CD8-positive, alpha-beta T cell (primary cell): ENCODE measurements at regions of chr2 and their contacts with region 1.

Region 1: GRCh38 chr2:72137498-72138010 is 10.1 kb downstream of the CYP26B1 start:
- DNase-seq: peak; percentile 27 to 75 (median 54)
- ATAC-seq: peak; percentile 48
- H3K4me3 ChIP-seq: no peak overlapping the region
- H3K4me3 Mint-ChIP-seq: no peak overlapping the region
- H3K27ac ChIP-seq: no peak overlapping the region
- H3K27ac Mint-ChIP-seq: no peak overlapping the region
- H3K4me1 ChIP-seq: no peaks in the 10 kb centered on the region
- H3K4me1 Mint-ChIP-seq: peaks cover 1% of the 10 kb centered on the region
- H3K27me3 ChIP-seq: no peaks in the 10 kb centered on the region
- H3K27me3 Mint-ChIP-seq: peaks cover 14% of the 10 kb centered on the region
- CTCF ChIP-seq: peak; percentile 73

Region 2: GRCh38 chr2:72112401-72112800 is 25.2 kb before region 1 on chr2:
- CTCF ChIA-PET with region 1: no interaction called
- POLR2A ChIA-PET with region 1: no interaction called
- intact Hi-C with region 1: no loop called
- DNase-seq: no peak
- ATAC-seq: no peak
- H3K4me3 ChIP-seq: no peak overlapping the region
- H3K4me3 Mint-ChIP-seq: no peak overlapping the region
- H3K27ac ChIP-seq: no peak overlapping the region
- H3K27ac Mint-ChIP-seq: no peak overlapping the region
- H3K4me1 ChIP-seq: no peaks in the 10 kb centered on the region
- H3K4me1 Mint-ChIP-seq: no peaks in the 10 kb centered on the region
- H3K27me3 ChIP-seq: no peaks in the 10 kb centered on the region
- H3K27me3 Mint-ChIP-seq: peaks cover 3% of the 10 kb centered on the region
- CTCF ChIP-seq: no peak

Region 3: DNA sequence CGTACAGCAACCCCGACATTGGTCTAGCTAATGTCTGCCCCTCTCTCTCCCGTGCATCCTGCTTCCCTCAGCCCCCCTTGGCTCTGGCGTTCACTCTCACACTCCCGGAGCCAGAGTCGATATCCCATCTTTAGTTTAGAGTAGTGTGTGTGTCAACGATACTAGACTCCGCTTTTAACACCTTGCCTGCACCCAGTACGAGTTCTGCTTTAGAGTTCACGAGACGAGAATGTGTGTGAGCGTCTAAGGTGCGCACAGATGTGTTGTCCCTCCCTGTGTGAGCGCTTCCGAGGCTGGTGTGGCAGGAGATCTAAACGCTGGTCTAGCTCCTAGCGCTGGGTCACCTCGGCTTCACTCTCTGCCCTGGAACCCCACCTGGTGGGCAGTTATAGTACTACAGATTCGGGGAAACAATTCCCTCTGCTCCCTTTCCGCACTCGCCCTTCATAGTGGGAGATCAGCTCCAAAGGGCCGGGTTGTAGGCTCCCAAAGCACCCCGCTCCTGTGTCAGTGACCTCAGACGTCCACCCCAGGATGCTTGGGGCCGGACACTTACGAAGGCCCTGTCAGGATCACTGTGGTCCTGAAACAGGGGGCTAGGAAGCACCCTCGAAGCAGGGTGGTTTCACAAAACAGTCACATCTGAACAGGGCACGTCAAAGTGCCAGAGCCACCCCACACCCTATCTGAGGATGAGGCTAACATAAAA is 12.8 kb after region 1 on chr2:
- CTCF ChIA-PET with region 1: interaction called, 10 read pairs
- POLR2A ChIA-PET with region 1: no interaction called
- intact Hi-C with region 1: no loop called
- DNase-seq: peak; percentile 20 to 73 (median 58)
- ATAC-seq: peak; percentile 70
- H3K4me3 ChIP-seq: peak overlapping the region; percentile 31 to 51
- H3K4me3 Mint-ChIP-seq: peak overlapping the region; percentile 79
- H3K27ac ChIP-seq: no peak overlapping the region
- H3K27ac Mint-ChIP-seq: no peak overlapping the region
- H3K4me1 ChIP-seq: peaks cover 39% of the 10 kb centered on the region
- H3K4me1 Mint-ChIP-seq: peaks cover 35% of the 10 kb centered on the region
- H3K27me3 ChIP-seq: peaks cover 31 to 39% of the 10 kb centered on the region in 2 experiments
- H3K27me3 Mint-ChIP-seq: peaks cover 64% of the 10 kb centered on the region
- CTCF ChIP-seq: peak; percentile 74

Region 4: DNA sequence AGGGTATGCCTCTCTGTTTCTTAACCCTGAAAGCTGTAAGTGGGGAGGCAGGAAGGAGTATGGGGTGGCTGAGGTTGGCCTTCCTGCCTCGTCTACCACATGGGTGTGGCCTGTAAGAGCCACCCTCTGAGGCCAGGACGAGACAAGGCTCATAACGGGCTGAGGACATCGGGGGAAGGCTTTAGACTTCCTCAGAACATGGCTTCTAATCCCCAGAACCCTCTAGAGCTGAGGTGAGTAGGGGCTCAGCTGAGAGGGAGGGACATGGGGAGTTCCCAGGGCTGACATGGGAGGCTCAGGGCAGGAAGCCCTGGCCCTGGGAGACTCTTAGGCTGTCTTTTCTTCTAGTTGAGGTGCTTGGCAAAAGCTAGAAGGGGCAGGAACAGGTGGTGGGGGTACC is 816.4 kb after region 1 on chr2:
- CTCF ChIA-PET with region 1: no interaction called
- POLR2A ChIA-PET with region 1: no interaction called
- intact Hi-C with region 1: no loop called
- DNase-seq: peak in 7 of 9 experiments; percentile 7 to 63 (median 16)
- ATAC-seq: peak; percentile 82
- H3K4me3 ChIP-seq: peak overlapping the region; percentile 34 to 46
- H3K4me3 Mint-ChIP-seq: peak overlapping the region; percentile 76
- H3K27ac ChIP-seq: peak overlapping the region in 1 of 2 experiments; percentile 58
- H3K27ac Mint-ChIP-seq: peak overlapping the region; percentile 73
- H3K4me1 ChIP-seq: peaks cover 17% of the 10 kb centered on the region
- H3K4me1 Mint-ChIP-seq: peaks cover 20% of the 10 kb centered on the region
- H3K27me3 ChIP-seq: no peaks in the 10 kb centered on the region
- H3K27me3 Mint-ChIP-seq: no peaks in the 10 kb centered on the region
- CTCF ChIP-seq: no peak